ENCODE measurements at regions of chr6 and their contacts with region 1.

Region 1: GRCh38 chr6:55276745-55277530 is 50.3 kb upstream of the GFRAL start:
- DNase-seq: peak; percentile 25
- H3K4me3 ChIP-seq: no peak overlapping the region
- H3K27ac ChIP-seq: no peak overlapping the region
- H3K4me1 ChIP-seq: no peaks in the 10 kb centered on the region
- H3K27me3 ChIP-seq: no peaks in the 10 kb centered on the region
- CTCF ChIP-seq: peak; percentile 51 to 58 (median 54)

Region 2: GRCh38 chr6:55953335-55953734 is 676.4 kb after region 1 on chr6:
- dilution Hi-C with region 1: loop called (anchors 25 kb)
- DNase-seq: no peak
- H3K4me3 ChIP-seq: no peak overlapping the region
- H3K27ac ChIP-seq: no peak overlapping the region
- H3K4me1 ChIP-seq: no peaks in the 10 kb centered on the region
- H3K27me3 ChIP-seq: no peaks in the 10 kb centered on the region
- CTCF ChIP-seq: peak in 2 of 3 experiments; percentile 23 to 35